ENCODE measurements at regions of chr10 and their contacts with region 1.

Region 1: GRCh38 chr10:99612167-99612831 is 7.9 kb downstream of the SLC25A28 start:
- DNase-seq: no peak
- H3K4me3 ChIP-seq: no peak overlapping the region
- H3K27ac ChIP-seq: peak overlapping the region in 1 of 4 donors; percentile 19
- H3K4me1 ChIP-seq: peaks cover 8 to 23% (median 17%) of the 10 kb centered on the region in 4 donors
- H3K27me3 ChIP-seq: no peaks in the 10 kb centered on the region
- CTCF ChIP-seq: peak; percentile 77 to 82 (median 79)
- EP300 ChIP-seq: no peak
- POLR2A ChIP-seq: no peak

Region 2: DNA sequence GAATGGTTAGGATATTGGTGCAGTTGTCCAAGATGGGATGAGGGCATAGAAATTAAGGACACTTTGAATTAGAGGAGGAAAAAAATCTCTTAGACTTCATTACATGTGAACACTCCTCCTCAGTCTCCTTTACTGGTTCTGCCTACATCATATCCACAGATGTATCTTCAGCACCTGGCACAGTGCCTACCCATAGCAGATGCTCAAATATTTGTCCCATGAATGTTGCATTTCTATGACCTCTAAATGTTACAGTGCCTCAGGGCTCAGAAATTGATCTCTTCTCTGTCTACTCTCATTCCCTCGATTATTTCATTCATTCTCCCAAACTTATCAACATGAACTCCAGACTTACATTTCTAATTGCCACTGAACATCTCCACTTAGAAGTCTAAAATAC is 266.1 kb before region 1 on chr10:
- intact Hi-C with region 1: no loop called
- DNase-seq: no peak
- H3K4me3 ChIP-seq: no peak overlapping the region
- H3K27ac ChIP-seq: no peak overlapping the region
- H3K4me1 ChIP-seq: peaks cover 0 to 15% (median 5%) of the 10 kb centered on the region in 4 donors
- H3K27me3 ChIP-seq: no peaks in the 10 kb centered on the region
- CTCF ChIP-seq: no peak
- EP300 ChIP-seq: no peak
- POLR2A ChIP-seq: no peak

Region 3: DNA sequence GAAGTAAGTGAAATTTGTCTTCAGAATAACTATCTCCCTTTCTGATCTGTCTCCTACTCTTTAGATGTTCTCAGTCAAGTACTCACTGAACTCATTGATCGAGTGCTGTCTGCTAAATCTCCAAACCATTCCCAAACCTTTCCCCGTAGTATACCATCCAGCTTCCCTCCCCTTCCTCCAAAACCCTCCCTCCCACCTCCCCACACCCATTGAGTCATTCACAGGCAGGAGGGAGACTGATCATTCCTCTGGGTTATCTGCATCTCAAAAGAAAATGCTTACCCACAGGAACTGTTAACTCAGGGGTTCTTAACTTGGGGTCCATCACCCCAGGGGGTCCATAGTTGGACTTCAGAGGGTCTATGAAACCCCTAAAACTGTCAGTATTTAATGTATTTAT is 219.3 kb before region 1 on chr10:
- intact Hi-C with region 1: loop called (anchors 2 kb)
- DNase-seq: no peak
- H3K4me3 ChIP-seq: no peak overlapping the region
- H3K27ac ChIP-seq: no peak overlapping the region
- H3K4me1 ChIP-seq: peaks cover 17 to 25% (median 23%) of the 10 kb centered on the region in 4 donors
- H3K27me3 ChIP-seq: no peaks in the 10 kb centered on the region
- CTCF ChIP-seq: no peak
- EP300 ChIP-seq: no peak
- POLR2A ChIP-seq: no peak

Region 4: DNA sequence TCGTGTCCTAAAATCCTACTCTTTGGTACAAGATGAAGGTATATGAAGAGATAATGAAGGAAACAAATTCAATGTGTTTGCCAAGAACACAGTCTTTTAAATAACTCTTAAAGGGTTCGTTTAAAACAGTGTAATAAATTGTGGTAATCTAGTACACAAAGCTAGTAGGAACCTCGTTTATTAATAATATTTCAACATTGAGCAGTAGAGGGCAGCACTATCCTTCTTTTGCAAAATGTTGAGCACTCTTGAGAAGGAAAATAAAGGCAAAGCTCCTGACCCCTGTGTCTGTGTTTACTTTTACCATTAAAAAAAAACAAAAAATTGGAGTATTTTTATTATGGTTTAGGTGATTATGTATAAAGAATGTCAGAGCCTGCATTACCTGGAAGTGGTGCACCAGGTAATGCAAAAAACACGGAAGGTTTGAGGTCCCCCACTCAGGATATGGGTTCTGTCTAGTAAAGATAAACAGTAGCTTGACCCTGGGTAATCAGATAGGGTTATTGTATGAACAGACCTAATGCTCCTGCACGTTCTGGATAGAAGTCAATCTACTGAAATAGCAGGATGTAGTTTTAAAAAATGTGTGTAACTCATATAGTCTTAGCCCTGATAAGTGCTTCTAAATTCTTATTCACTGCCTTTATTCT is 176.2 kb before region 1 on chr10:
- intact Hi-C with region 1: loop called (anchors 2 kb)
- DNase-seq: no peak
- H3K4me3 ChIP-seq: no peak overlapping the region
- H3K27ac ChIP-seq: no peak overlapping the region
- H3K4me1 ChIP-seq: peaks cover 15 to 52% (median 49%) of the 10 kb centered on the region in 4 donors
- H3K27me3 ChIP-seq: no peaks in the 10 kb centered on the region
- CTCF ChIP-seq: peak; percentile 50 to 57 (median 51)
- EP300 ChIP-seq: no peak
- POLR2A ChIP-seq: no peak